ENCODE measurements at regions of chr16 and their contacts with region 1.

Region 1: DNA sequence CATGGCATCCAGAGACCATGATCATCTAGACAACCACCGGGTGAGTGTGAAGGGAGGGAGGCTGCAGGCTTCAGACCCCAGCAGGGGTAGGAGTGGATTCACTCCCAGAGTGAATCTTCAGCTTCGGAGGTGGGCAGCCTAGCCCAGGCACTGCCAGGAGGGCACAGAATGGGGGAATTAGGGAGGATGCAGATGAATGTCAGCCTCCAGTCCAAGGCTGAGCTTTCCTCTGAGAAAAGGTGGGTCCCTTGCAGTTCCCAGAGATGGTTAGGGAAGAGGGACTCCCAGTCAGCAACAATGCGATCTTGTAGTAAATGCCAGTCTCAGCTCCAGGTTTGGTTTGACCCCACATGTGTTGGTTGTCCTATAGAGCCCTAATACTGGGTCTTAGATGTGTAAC is 36.7 kb upstream of the POLR3E start:
- DNase-seq: no peak
- CTCF ChIP-seq: no peak

Region 2: DNA sequence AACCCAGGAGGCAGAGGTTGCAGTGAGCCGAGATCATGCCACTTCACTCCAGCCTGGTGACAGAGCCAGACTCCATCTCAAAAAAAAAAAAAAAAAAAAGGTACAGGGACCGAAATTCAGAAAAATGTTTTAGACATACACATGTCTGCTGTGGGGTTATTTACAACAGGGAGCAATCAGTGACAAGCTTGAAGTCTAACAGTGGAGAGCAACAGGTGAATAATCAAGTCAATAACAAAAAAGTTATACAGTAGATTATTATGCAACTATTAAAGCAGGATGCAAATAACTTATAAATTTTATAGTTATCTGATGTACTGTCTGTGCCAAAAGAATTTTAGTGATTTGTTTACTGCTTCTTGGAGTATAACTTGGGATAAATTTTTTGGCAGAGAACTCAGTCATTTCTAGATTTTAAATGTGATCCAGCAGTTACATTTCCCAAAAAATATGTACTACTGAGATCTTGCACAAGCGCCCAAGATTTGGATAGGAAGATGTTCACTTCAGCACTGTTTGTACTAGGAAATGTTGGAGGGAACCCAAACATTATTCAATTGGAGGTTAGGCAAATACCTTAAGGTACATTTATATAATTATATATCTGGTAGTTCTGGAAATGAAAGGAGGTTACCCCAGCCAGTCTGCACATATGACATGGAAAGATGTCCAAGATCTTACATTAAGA is 20.3 kb before region 1 on chr16:
- CTCF ChIA-PET with region 1: interaction called, 11 read pairs
- POLR2A ChIA-PET with region 1: no interaction called
- DNase-seq: no peak
- CTCF ChIP-seq: no peak

Measured in GM10248 (cell line).